CD4-positive, alpha-beta memory T cell (primary cell): ENCODE measurements at regions of chr14 and their contacts with region 1.

Region 1: DNA sequence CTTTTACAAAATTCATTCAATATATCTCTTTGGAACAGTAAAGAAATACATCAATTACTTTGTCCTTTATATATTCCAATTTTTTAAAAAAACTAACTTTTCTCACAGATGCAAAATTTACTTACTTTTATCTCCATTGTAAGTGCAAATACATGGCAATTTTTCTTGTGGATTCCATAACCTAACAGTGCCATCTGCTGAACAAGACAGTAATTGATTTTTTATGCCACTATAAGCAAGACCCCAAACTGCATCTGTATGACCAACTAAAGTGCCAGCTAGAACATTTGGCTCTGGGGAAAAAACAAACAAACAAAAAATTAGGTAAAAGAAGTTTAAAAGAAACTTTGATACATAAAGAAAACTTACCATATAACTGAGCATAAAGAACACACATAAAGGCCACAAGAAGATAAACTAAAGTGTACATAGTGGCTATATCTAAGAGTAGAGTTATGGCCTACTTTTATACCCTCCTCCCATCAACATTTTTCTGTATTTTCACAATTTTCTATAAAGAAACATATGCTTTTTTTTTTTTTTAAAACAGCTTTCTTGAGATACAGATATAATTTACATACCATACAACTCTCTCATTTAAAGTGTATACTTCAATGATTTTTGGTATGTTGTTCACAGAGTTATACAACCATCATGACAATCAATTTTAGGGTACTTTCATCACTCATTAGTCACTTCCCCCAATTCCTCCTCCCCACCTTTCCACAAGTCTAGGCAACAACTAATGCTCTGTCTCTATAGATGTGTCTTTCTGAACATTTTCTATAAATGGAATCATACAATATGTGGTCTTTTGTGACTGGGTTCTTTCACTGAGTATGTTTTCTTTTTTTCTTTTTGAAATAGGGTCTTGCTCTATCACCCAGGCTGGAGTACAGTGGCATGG is 32.6 kb downstream of the COCH start:
- DNase-seq: peak in 1 of 5 donors; percentile 1
- H3K4me3 ChIP-seq: no peak overlapping the region
- H3K4me3 Mint-ChIP-seq: no peak overlapping the region
- H3K27ac ChIP-seq: no peak overlapping the region
- H3K27ac Mint-ChIP-seq: peak overlapping the region in 1 of 7 donors; percentile 14
- H3K4me1 ChIP-seq: peaks cover 6% of the 10 kb centered on the region
- H3K4me1 Mint-ChIP-seq: peaks cover 0 to 6% (median 1%) of the 10 kb centered on the region in 4 donors
- H3K27me3 ChIP-seq: no peaks in the 10 kb centered on the region
- H3K27me3 Mint-ChIP-seq: no peaks in the 10 kb centered on the region

Region 2: DNA sequence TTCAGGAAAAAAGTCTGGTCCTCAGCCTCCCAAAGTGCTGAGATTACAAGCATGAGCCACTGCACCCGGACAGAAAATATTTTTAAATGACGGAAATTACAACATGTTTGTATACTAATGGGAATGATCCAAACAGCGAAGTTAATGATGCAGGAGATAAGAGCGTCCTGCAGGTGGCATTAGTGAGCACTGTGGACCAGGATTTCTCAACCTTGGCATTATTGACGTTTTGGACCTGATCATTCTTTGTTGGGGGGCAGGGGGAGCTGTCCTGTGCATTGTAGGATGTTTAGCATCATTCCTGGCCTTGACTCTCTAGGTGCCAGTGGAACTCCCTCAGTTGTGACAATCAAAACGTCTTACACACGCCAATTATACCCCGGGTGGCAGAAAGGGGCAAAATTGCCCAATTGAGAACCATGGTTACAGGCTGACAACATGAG is 250.8 kb before region 1 on chr14:
- CTCF ChIA-PET with region 1: no interaction called
- POLR2A ChIA-PET with region 1: no interaction called
- intact Hi-C with region 1: loop called (anchors 5 kb)
- DNase-seq: peak in 4 of 5 donors; percentile 21 to 40 (median 30)
- H3K4me3 ChIP-seq: no peak overlapping the region
- H3K4me3 Mint-ChIP-seq: no peak overlapping the region
- H3K27ac ChIP-seq: no peak overlapping the region
- H3K27ac Mint-ChIP-seq: no peak overlapping the region
- H3K4me1 ChIP-seq: no peaks in the 10 kb centered on the region
- H3K4me1 Mint-ChIP-seq: peaks cover 0 to 4% (median 0%) of the 10 kb centered on the region in 4 donors
- H3K27me3 ChIP-seq: no peaks in the 10 kb centered on the region
- H3K27me3 Mint-ChIP-seq: no peaks in the 10 kb centered on the region

Region 3: GRCh38 chr14:30725763-30726162 is 181.2 kb before region 1 on chr14:
- CTCF ChIA-PET with region 1: no interaction called
- POLR2A ChIA-PET with region 1: no interaction called
- intact Hi-C with region 1: loop called (anchors 10 kb)
- DNase-seq: no peak
- H3K4me3 ChIP-seq: no peak overlapping the region
- H3K4me3 Mint-ChIP-seq: no peak overlapping the region
- H3K27ac ChIP-seq: no peak overlapping the region
- H3K27ac Mint-ChIP-seq: peak overlapping the region in 1 of 7 donors; percentile 39
- H3K4me1 ChIP-seq: no peaks in the 10 kb centered on the region
- H3K4me1 Mint-ChIP-seq: peaks cover 0 to 7% (median 5%) of the 10 kb centered on the region in 4 donors
- H3K27me3 ChIP-seq: no peaks in the 10 kb centered on the region
- H3K27me3 Mint-ChIP-seq: no peaks in the 10 kb centered on the region

Region 4: GRCh38 chr14:30826070-30826469 is 80.9 kb before region 1 on chr14:
- CTCF ChIA-PET with region 1: no interaction called
- POLR2A ChIA-PET with region 1: no interaction called
- intact Hi-C with region 1: no loop called
- DNase-seq: no peak
- H3K4me3 ChIP-seq: no peak overlapping the region
- H3K4me3 Mint-ChIP-seq: no peak overlapping the region
- H3K27ac ChIP-seq: no peak overlapping the region
- H3K27ac Mint-ChIP-seq: no peak overlapping the region
- H3K4me1 ChIP-seq: no peaks in the 10 kb centered on the region
- H3K4me1 Mint-ChIP-seq: no peaks in the 10 kb centered on the region
- H3K27me3 ChIP-seq: no peaks in the 10 kb centered on the region
- H3K27me3 Mint-ChIP-seq: peaks cover 7 to 11% of the 10 kb centered on the region in 2 donors

Region 5: DNA sequence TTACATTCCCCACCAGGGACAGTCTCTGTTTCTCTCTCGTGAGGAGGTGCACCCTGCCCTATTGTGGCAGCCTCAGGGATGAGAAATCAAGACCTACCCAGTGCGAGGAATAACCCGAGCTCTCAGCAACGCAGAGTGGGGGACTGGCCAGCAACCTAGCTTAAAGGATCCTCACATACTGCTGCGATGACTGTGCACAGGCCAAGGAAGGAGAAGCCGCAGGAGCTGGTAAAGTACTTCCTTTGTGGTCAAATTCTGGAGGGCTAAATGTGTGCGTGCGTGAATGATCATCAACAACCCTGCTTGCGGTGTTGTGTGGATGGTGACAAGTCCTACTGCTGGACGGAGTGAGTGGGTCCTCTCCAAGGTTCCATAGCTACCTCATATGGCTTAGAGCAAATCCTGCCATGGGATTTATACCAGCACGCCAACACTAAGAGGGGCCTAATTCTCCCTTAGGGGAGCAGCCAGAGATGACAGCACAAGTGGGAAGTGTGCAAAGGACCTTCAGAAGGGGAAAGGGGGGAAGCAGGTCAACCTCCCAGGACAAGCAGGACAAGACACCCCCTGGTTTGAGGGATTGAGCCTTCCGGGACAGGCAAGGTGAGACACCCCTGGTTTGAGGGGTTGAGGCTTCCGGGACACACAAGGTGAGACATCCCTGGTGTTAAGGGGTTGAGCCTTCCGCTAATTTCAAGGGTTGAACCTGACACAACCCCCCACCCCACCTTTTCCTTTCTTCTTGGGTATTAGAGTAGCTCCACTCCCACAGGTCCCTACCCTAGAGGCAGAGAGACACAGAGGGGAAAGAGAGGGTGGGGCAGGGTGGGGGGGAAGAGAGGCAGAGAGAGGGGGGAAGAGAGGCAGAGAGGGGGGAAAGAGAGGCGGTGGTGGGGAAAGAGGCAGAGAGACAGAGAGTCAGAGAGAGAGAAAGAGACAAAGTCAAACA is 59.7 kb after region 1 on chr14:
- CTCF ChIA-PET with region 1: no interaction called
- POLR2A ChIA-PET with region 1: no interaction called
- intact Hi-C with region 1: no loop called
- DNase-seq: no peak
- H3K4me3 ChIP-seq: no peak overlapping the region
- H3K4me3 Mint-ChIP-seq: no peak overlapping the region
- H3K27ac ChIP-seq: no peak overlapping the region
- H3K27ac Mint-ChIP-seq: peak overlapping the region in 1 of 7 donors; percentile 82
- H3K4me1 ChIP-seq: peaks cover 7% of the 10 kb centered on the region
- H3K4me1 Mint-ChIP-seq: peaks cover 28 to 48% (median 36%) of the 10 kb centered on the region in 4 donors
- H3K27me3 ChIP-seq: no peaks in the 10 kb centered on the region
- H3K27me3 Mint-ChIP-seq: no peaks in the 10 kb centered on the region